Activated CD4-positive, alpha-beta T cell treated with anti-CD3 and anti-CD28 coated beads for 36 hours (primary cell): ENCODE measurements at regions of chr3 and their contacts with region 1.

Region 1: DNA sequence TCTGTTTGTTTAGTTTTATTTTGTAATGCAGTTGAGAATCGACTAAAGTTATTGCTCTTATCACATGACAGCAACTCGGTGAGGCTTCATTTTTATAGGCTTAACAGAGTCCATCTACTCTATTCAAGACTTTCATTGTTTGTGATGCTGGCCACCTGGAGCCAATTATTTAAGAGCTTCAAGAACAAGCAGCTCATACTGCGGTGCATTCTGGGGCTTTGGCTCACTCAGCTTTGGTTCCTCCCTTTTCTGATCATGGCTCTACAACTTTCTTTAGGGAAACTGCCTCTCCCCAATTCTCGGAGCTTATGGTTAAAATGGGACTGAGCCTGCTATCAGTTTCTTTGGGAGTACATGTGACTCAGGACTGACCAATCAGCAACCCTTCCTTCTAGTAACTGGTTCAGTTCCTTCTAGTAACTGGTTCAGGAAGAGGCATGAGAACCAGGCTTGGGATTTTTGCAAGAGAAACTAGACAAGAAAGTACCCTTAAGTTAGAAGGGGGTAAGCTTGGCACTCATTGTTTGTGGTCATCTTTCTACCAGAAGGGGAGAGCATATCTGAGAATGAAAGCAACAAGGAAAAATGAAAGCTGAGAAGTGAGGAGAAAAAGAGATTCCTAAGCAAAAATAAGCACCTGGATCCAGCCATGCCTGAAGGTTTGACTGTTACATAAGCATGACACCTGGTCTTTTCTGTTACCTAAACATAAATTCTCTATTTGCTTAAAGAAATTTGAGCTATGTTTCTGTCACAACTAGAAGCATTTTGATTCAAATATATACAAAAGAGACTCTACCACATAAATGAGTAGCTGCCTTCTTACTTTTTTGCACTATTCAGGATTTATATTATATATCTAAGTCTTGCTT is 24.1 kb upstream of the ARHGEF3 start:
- DNase-seq: no peak
- ATAC-seq: no peak
- H3K4me3 Mint-ChIP-seq: no peak overlapping the region
- H3K27ac Mint-ChIP-seq: no peak overlapping the region
- H3K4me1 Mint-ChIP-seq: peaks cover 40% of the 10 kb centered on the region
- H3K27me3 Mint-ChIP-seq: no peaks in the 10 kb centered on the region

Region 2: GRCh38 chr3:55059027-55059629 is 1766.7 kb before region 1 on chr3:
- CTCF ChIA-PET with region 1: no interaction called
- POLR2A ChIA-PET with region 1: no interaction called
- intact Hi-C with region 1: no loop called
- DNase-seq: no peak
- ATAC-seq: no peak
- H3K4me3 Mint-ChIP-seq: no peak overlapping the region
- H3K27ac Mint-ChIP-seq: no peak overlapping the region
- H3K4me1 Mint-ChIP-seq: no peaks in the 10 kb centered on the region
- H3K27me3 Mint-ChIP-seq: peaks cover 3% of the 10 kb centered on the region

Region 3: GRCh38 chr3:56812754-56813650 is 12.8 kb before region 1 on chr3:
- CTCF ChIA-PET with region 1: interaction called, 12 read pairs
- POLR2A ChIA-PET with region 1: interaction called, 3 read pairs
- intact Hi-C with region 1: no loop called
- DNase-seq: no peak
- ATAC-seq: no peak
- H3K4me3 Mint-ChIP-seq: peak overlapping the region; percentile 3
- H3K27ac Mint-ChIP-seq: peak overlapping the region; percentile 17
- H3K4me1 Mint-ChIP-seq: peaks cover 60% of the 10 kb centered on the region
- H3K27me3 Mint-ChIP-seq: no peaks in the 10 kb centered on the region

Region 4: GRCh38 chr3:57141719-57142410 is 316.1 kb after region 1 on chr3:
- CTCF ChIA-PET with region 1: no interaction called
- POLR2A ChIA-PET with region 1: no interaction called
- intact Hi-C with region 1: no loop called
- DNase-seq: no peak
- ATAC-seq: no peak
- H3K4me3 Mint-ChIP-seq: no peak overlapping the region
- H3K27ac Mint-ChIP-seq: no peak overlapping the region
- H3K4me1 Mint-ChIP-seq: no peaks in the 10 kb centered on the region
- H3K27me3 Mint-ChIP-seq: peaks cover 27% of the 10 kb centered on the region